CD4-positive, alpha-beta memory T cell (primary cell): ENCODE measurements at regions of chr20 and their contacts with region 1.

Region 1: GRCh38 chr20:36439040-36439730 is 102.1 kb upstream of the MYL9 start:
- DNase-seq: peak in 4 of 5 donors; percentile 36 to 49 (median 38)
- H3K4me3 ChIP-seq: no peak overlapping the region
- H3K4me3 Mint-ChIP-seq: peak overlapping the region in 1 of 8 donors; percentile 40
- H3K27ac ChIP-seq: no peak overlapping the region
- H3K27ac Mint-ChIP-seq: peak overlapping the region in 2 of 7 donors; percentile 3 to 30
- H3K4me1 ChIP-seq: no peaks in the 10 kb centered on the region
- H3K4me1 Mint-ChIP-seq: peaks cover 3 to 13% (median 8%) of the 10 kb centered on the region in 4 donors
- H3K27me3 ChIP-seq: no peaks in the 10 kb centered on the region
- H3K27me3 Mint-ChIP-seq: no peaks in the 10 kb centered on the region

Region 2: DNA sequence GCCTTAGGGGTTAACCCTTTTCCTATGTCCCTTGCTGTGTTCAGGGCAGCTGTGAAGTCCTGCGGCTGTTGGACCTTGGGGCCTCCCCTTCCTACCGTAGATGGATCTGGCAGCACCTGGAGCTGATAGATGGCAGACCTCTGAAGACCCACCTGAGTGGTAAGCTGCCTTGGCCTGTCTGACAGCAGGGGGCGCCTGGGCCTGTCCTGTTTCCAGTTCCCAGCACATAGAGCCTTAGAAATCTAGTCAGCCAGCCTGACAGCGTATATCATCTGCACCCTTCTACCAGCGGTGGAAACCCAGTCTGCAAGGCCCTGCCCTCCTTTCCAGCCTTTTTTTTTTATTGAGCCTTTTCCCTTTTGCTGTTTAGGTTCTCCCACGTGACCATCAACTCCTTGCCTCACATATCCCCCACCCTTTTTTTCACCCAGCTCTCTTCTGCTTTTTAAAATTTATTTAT is 444.2 kb before region 1 on chr20:
- CTCF ChIA-PET with region 1: interaction called, 3 read pairs
- POLR2A ChIA-PET with region 1: no interaction called
- intact Hi-C with region 1: loop called (anchors 1 kb)
- DNase-seq: peak; percentile 70 to 74 (median 71)
- H3K4me3 ChIP-seq: no peak overlapping the region
- H3K4me3 Mint-ChIP-seq: peak overlapping the region in 1 of 8 donors; percentile 2
- H3K27ac ChIP-seq: no peak overlapping the region
- H3K27ac Mint-ChIP-seq: peak overlapping the region in 2 of 7 donors; percentile 42 to 48
- H3K4me1 ChIP-seq: peaks cover 3% of the 10 kb centered on the region
- H3K4me1 Mint-ChIP-seq: peaks cover 5 to 8% (median 6%) of the 10 kb centered on the region in 4 donors
- H3K27me3 ChIP-seq: no peaks in the 10 kb centered on the region
- H3K27me3 Mint-ChIP-seq: peaks cover 3 to 5% of the 10 kb centered on the region in 2 donors

Region 3: DNA sequence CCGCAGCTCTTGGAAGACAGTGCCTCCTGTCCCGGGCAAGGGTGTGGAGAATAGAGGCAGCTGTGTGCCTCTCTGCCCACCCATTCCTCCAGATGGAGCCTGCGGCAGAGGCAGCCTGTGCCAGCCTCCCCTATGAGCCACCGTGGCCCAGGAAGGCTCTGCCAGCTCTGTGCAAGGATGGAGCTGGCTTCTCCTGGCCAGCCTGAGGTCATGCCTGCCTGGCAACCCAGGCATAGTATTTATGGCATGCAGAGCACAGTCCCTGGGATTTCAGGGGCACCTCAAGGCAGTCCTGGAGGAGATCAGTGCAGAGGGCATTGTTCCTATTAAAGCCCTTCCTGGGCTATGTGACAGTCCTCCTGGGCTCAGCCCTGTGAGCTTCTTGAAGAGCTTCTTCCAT is 283.2 kb before region 1 on chr20:
- CTCF ChIA-PET with region 1: interaction called, 7 read pairs
- POLR2A ChIA-PET with region 1: no interaction called
- intact Hi-C with region 1: loop called (anchors 2 kb)
- DNase-seq: no peak
- H3K4me3 ChIP-seq: no peak overlapping the region
- H3K4me3 Mint-ChIP-seq: peak overlapping the region in 1 of 8 donors; percentile 47
- H3K27ac ChIP-seq: no peak overlapping the region
- H3K27ac Mint-ChIP-seq: no peak overlapping the region
- H3K4me1 ChIP-seq: peaks cover 6% of the 10 kb centered on the region
- H3K4me1 Mint-ChIP-seq: peaks cover 0 to 4% (median 2%) of the 10 kb centered on the region in 4 donors
- H3K27me3 ChIP-seq: peaks cover 15% of the 10 kb centered on the region
- H3K27me3 Mint-ChIP-seq: peaks cover 14 to 30% of the 10 kb centered on the region in 2 donors

Region 4: GRCh38 chr20:36214684-36215256 is 224.4 kb before region 1 on chr20:
- CTCF ChIA-PET with region 1: interaction called, 10 read pairs
- POLR2A ChIA-PET with region 1: no interaction called
- intact Hi-C with region 1: loop called (anchors 1 kb)
- DNase-seq: peak in 1 of 5 donors; percentile 10
- H3K4me3 ChIP-seq: no peak overlapping the region
- H3K4me3 Mint-ChIP-seq: no peak overlapping the region
- H3K27ac ChIP-seq: no peak overlapping the region
- H3K27ac Mint-ChIP-seq: no peak overlapping the region
- H3K4me1 ChIP-seq: no peaks in the 10 kb centered on the region
- H3K4me1 Mint-ChIP-seq: no peaks in the 10 kb centered on the region
- H3K27me3 ChIP-seq: no peaks in the 10 kb centered on the region
- H3K27me3 Mint-ChIP-seq: peaks cover 0 to 11% of the 10 kb centered on the region in 2 donors

Region 5: DNA sequence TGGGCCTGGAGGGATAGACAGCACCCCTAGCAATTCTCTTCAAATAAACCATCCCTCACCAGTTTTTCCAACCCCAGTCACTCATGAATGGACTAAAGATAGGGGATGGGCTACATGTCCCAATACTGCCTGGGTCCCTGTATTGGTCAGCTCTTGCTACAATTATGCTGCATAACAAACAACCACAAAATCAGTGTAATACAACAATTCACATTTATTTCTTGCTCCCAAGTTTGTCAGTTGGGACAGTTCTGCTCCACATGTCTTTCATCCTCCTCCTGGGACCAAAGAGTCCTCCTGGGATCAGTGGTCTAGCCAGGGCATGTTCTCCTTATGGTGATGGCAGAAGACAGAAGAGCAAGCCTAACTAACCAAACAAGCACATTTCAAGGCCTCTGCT is 10.5 kb after region 1 on chr20:
- CTCF ChIA-PET with region 1: interaction called, 19 read pairs
- POLR2A ChIA-PET with region 1: no interaction called
- intact Hi-C with region 1: no loop called
- DNase-seq: no peak
- H3K4me3 ChIP-seq: no peak overlapping the region
- H3K4me3 Mint-ChIP-seq: no peak overlapping the region
- H3K27ac ChIP-seq: no peak overlapping the region
- H3K27ac Mint-ChIP-seq: no peak overlapping the region
- H3K4me1 ChIP-seq: no peaks in the 10 kb centered on the region
- H3K4me1 Mint-ChIP-seq: no peaks in the 10 kb centered on the region
- H3K27me3 ChIP-seq: no peaks in the 10 kb centered on the region
- H3K27me3 Mint-ChIP-seq: peaks cover 3 to 9% of the 10 kb centered on the region in 2 donors

Region 6: DNA sequence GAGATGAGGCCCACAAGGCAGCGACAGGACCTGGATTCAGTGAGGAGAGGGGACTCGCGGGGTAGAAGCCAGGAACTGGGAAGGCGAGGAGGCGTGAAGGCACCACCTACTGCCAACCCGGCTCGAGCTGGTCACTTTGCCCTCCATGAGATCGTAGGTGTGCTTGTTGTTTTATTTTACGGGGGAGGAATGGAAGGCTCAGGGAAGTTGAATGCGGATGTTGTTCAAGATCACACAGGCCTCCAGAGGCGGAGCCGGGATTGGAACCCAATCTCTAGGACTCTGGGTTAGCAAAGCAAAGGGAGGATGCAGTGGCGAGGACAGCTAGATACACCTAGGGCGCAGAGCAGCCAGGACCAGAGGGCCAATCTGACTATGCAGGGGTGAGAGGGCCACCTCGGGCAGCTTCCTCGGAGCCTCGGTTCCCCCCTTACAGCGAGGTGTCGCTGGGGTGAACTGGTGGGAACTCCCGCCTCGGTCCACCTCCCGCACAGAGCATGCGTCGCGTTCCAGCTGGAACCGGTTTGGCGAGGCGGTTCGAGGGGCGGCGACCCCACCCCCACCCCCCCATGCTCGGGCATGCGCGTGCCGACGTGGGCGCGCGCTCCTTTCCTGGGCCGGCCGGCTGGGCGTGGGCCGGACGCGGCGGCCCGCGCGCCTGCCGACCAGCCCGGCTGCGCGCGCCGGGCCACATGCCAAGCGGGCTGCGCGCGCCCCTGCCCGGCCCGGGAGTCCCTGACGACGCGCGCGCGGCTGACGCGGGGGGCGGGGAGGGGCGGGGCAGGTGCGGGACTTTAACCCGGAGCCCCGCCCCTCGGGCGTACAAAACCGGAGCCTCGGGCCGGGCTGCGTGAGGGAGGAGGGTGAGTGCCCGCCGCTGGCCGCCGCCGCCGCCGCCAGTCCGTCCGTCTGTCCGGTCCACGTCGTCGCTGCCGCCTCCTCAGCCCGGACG is 21.7 kb after region 1 on chr20:
- CTCF ChIA-PET with region 1: interaction called, 4 read pairs
- POLR2A ChIA-PET with region 1: interaction called, 4 read pairs
- intact Hi-C with region 1: loop called (anchors 2 kb)
- DNase-seq: peak; percentile 85 to 90 (median 86)
- H3K4me3 ChIP-seq: peak overlapping the region; percentile 8 to 37
- H3K4me3 Mint-ChIP-seq: peak overlapping the region; percentile 80 to 86 (median 82)
- H3K27ac ChIP-seq: peak overlapping the region; percentile 90
- H3K27ac Mint-ChIP-seq: peak overlapping the region; percentile 94 to 97 (median 96)
- H3K4me1 ChIP-seq: peaks cover 48% of the 10 kb centered on the region
- H3K4me1 Mint-ChIP-seq: peaks cover 31 to 56% (median 42%) of the 10 kb centered on the region in 4 donors
- H3K27me3 ChIP-seq: no peaks in the 10 kb centered on the region
- H3K27me3 Mint-ChIP-seq: no peaks in the 10 kb centered on the region

Region 7: GRCh38 chr20:36541227-36541763 is 102.1 kb after region 1 on chr20 and contains the start of gene MYL9:
- CTCF ChIA-PET with region 1: no interaction called
- POLR2A ChIA-PET with region 1: no interaction called
- intact Hi-C with region 1: no loop called
- DNase-seq: no peak
- H3K4me3 ChIP-seq: no peak within 1 kb of the TSS
- H3K4me3 Mint-ChIP-seq: peak within 1 kb of the TSS in 1 of 8 donors; percentile 23
- H3K27ac ChIP-seq: no peak within 1 kb of the TSS
- H3K27ac Mint-ChIP-seq: peak within 1 kb of the TSS in 1 of 7 donors; percentile 43
- H3K4me1 ChIP-seq: no peaks in the 10 kb centered on the region
- H3K4me1 Mint-ChIP-seq: peaks cover 0 to 1% (median 0%) of the 10 kb centered on the region in 4 donors
- H3K27me3 ChIP-seq: no peaks in the 10 kb centered on the region
- H3K27me3 Mint-ChIP-seq: peaks cover 0 to 3% of the 10 kb centered on the region in 2 donors
- total RNA-seq, gene MYL9: not detected